ENCODE measurements at regions of chr2 and their contacts with region 1.

Region 1: GRCh38 chr2:17646081-17646554 is 105.6 kb downstream of the VSNL1 start:
- DNase-seq: peak in 6 of 9 donors; percentile 13 to 42 (median 32)
- ATAC-seq: peak; percentile 73
- H3K4me3 ChIP-seq: no peak overlapping the region
- H3K4me3 Mint-ChIP-seq: no peak overlapping the region
- H3K27ac ChIP-seq: no peak overlapping the region
- H3K27ac Mint-ChIP-seq: no peak overlapping the region
- H3K4me1 ChIP-seq: no peaks in the 10 kb centered on the region
- H3K4me1 Mint-ChIP-seq: peaks cover 0 to 8% (median 0%) of the 10 kb centered on the region in 7 donors
- H3K27me3 ChIP-seq: no peaks in the 10 kb centered on the region
- H3K27me3 Mint-ChIP-seq: no peaks in the 10 kb centered on the region

Region 2: GRCh38 chr2:16900405-16901025 is 745.6 kb before region 1 on chr2:
- CTCF ChIA-PET with region 1: no interaction called
- POLR2A ChIA-PET with region 1: no interaction called
- intact Hi-C with region 1: no loop called
- DNase-seq: no peak
- ATAC-seq: peak; percentile 32
- H3K4me3 ChIP-seq: no peak overlapping the region
- H3K4me3 Mint-ChIP-seq: no peak overlapping the region
- H3K27ac ChIP-seq: no peak overlapping the region
- H3K27ac Mint-ChIP-seq: no peak overlapping the region
- H3K4me1 ChIP-seq: no peaks in the 10 kb centered on the region
- H3K4me1 Mint-ChIP-seq: no peaks in the 10 kb centered on the region
- H3K27me3 ChIP-seq: no peaks in the 10 kb centered on the region
- H3K27me3 Mint-ChIP-seq: peaks cover 0 to 6% (median 0%) of the 10 kb centered on the region in 5 donors

Region 3: GRCh38 chr2:17272652-17273525 is 373.2 kb before region 1 on chr2:
- CTCF ChIA-PET with region 1: no interaction called
- POLR2A ChIA-PET with region 1: no interaction called
- intact Hi-C with region 1: no loop called
- DNase-seq: no peak
- ATAC-seq: no peak
- H3K4me3 ChIP-seq: no peak overlapping the region
- H3K4me3 Mint-ChIP-seq: no peak overlapping the region
- H3K27ac ChIP-seq: no peak overlapping the region
- H3K27ac Mint-ChIP-seq: no peak overlapping the region
- H3K4me1 ChIP-seq: no peaks in the 10 kb centered on the region
- H3K4me1 Mint-ChIP-seq: no peaks in the 10 kb centered on the region
- H3K27me3 ChIP-seq: no peaks in the 10 kb centered on the region
- H3K27me3 Mint-ChIP-seq: no peaks in the 10 kb centered on the region

Region 4: GRCh38 chr2:17672583-17673317 is 26.6 kb after region 1 on chr2:
- CTCF ChIA-PET with region 1: interaction called, 13 read pairs
- POLR2A ChIA-PET with region 1: no interaction called
- intact Hi-C with region 1: loop called (anchors 1 kb)
- DNase-seq: no peak
- ATAC-seq: no peak
- H3K4me3 ChIP-seq: no peak overlapping the region
- H3K4me3 Mint-ChIP-seq: no peak overlapping the region
- H3K27ac ChIP-seq: no peak overlapping the region
- H3K27ac Mint-ChIP-seq: no peak overlapping the region
- H3K4me1 ChIP-seq: no peaks in the 10 kb centered on the region
- H3K4me1 Mint-ChIP-seq: peaks cover 0 to 9% (median 0%) of the 10 kb centered on the region in 7 donors
- H3K27me3 ChIP-seq: no peaks in the 10 kb centered on the region
- H3K27me3 Mint-ChIP-seq: no peaks in the 10 kb centered on the region

Region 5: GRCh38 chr2:17830053-17831034 is 184.2 kb after region 1 on chr2:
- CTCF ChIA-PET with region 1: no interaction called
- POLR2A ChIA-PET with region 1: no interaction called
- intact Hi-C with region 1: loop called in 1 of 2 experiments (anchors 2 kb)
- DNase-seq: peak in 5 of 9 donors; percentile 4 to 65 (median 6)
- ATAC-seq: peak; percentile 73
- H3K4me3 ChIP-seq: no peak overlapping the region
- H3K4me3 Mint-ChIP-seq: peak overlapping the region in 2 of 10 donors; percentile 15 to 17
- H3K27ac ChIP-seq: no peak overlapping the region
- H3K27ac Mint-ChIP-seq: no peak overlapping the region
- H3K4me1 ChIP-seq: no peaks in the 10 kb centered on the region
- H3K4me1 Mint-ChIP-seq: peaks cover 0 to 9% (median 0%) of the 10 kb centered on the region in 7 donors
- H3K27me3 ChIP-seq: peaks cover 0 to 11% of the 10 kb centered on the region in 2 donors
- H3K27me3 Mint-ChIP-seq: peaks cover 33 to 48% (median 45%) of the 10 kb centered on the region in 5 donors

Region 6: DNA sequence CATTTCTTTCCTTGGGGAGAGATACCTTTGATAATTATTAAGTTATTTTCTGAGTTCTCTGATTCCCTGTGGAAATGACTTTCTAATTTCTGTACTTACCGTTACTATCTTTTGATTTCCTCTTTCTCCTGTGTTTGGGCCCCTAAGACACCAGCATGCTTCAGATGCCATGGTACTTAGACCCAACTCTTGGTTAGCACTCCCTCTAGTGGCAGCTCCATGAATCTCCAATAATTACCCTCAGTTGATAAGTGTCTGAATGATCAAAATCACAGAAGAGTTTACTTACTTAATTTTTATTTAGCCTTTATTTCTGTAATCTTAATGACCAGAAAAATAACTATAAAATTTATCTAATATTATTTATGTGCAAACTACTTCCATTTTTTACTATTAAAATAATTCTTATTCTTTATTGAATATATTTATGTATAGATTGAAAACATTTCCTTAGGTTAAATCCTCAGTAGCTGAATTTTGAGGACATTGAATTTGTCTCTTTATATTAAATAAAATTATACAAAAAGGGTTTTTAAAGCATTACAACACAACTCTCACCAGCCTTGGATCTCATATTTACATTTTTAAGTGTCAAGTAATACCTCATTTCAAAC is 532.7 kb after region 1 on chr2:
- CTCF ChIA-PET with region 1: no interaction called
- POLR2A ChIA-PET with region 1: no interaction called
- intact Hi-C with region 1: loop called in 1 of 2 experiments (anchors 1 kb)
- DNase-seq: peak in 3 of 9 donors; percentile 7 to 14 (median 9)
- ATAC-seq: no peak
- H3K4me3 ChIP-seq: no peak overlapping the region
- H3K4me3 Mint-ChIP-seq: no peak overlapping the region
- H3K27ac ChIP-seq: no peak overlapping the region
- H3K27ac Mint-ChIP-seq: no peak overlapping the region
- H3K4me1 ChIP-seq: no peaks in the 10 kb centered on the region
- H3K4me1 Mint-ChIP-seq: no peaks in the 10 kb centered on the region
- H3K27me3 ChIP-seq: no peaks in the 10 kb centered on the region
- H3K27me3 Mint-ChIP-seq: peaks cover 0 to 9% (median 1%) of the 10 kb centered on the region in 5 donors

Region 7: GRCh38 chr2:18378020-18378653 is 732.0 kb after region 1 on chr2:
- CTCF ChIA-PET with region 1: interaction called, 5 read pairs
- POLR2A ChIA-PET with region 1: no interaction called
- intact Hi-C with region 1: loop called in 1 of 2 experiments (anchors 1 kb)
- DNase-seq: peak in 5 of 9 donors; percentile 9 to 24 (median 20)
- ATAC-seq: peak; percentile 53
- H3K4me3 ChIP-seq: no peak overlapping the region
- H3K4me3 Mint-ChIP-seq: no peak overlapping the region
- H3K27ac ChIP-seq: no peak overlapping the region
- H3K27ac Mint-ChIP-seq: no peak overlapping the region
- H3K4me1 ChIP-seq: no peaks in the 10 kb centered on the region
- H3K4me1 Mint-ChIP-seq: no peaks in the 10 kb centered on the region
- H3K27me3 ChIP-seq: no peaks in the 10 kb centered on the region
- H3K27me3 Mint-ChIP-seq: peaks cover 6 to 21% (median 20%) of the 10 kb centered on the region in 5 donors

Measured in naive thymus-derived CD4-positive, alpha-beta T cell (primary cell).